ENCODE measurements at regions of chr3 and their contacts with region 1.

Region 1: DNA sequence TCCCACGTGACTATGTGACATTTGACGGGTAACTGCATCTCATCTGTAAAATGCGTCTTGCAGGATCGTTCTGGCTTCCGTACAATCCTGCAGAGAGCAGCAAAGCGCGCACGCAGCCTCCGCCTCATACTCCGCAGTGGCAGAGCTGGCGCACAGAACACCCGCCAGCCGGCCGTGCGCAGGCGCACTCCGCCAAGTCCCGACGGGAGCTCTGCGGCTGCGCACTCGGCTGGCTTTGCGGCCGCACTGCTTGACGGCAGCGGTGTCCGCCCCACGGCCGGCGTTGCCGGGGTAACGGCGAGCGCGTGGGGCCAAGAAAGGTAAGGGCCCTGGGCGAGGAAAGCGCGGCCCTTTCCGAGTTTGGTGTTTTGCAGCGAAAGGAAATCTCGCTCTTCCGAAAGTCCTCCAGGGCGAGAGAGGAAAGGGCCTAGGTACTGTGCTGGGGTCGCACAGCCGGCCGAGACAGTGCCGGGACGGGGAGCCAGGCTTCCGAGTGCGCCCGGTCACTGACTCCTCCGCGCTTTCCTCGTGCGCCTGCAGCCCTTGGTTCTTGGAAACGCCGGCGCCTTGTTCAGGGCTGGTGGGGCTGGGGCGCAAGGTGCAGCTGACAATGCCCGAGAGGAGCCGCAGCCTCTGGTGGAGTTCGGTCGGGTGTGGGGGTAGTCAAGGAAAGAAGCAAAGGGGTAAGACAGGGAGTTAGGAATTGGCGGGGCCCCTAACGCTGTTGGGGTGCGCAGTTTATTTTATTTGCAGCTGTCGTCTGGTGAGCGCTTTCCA is at the start of gene TSEN2:
- DNase-seq: peak; percentile 95
- ATAC-seq: peak; percentile 97
- total RNA-seq, gene TSEN2: 15.3 to 16.8 TPM

Region 2: DNA sequence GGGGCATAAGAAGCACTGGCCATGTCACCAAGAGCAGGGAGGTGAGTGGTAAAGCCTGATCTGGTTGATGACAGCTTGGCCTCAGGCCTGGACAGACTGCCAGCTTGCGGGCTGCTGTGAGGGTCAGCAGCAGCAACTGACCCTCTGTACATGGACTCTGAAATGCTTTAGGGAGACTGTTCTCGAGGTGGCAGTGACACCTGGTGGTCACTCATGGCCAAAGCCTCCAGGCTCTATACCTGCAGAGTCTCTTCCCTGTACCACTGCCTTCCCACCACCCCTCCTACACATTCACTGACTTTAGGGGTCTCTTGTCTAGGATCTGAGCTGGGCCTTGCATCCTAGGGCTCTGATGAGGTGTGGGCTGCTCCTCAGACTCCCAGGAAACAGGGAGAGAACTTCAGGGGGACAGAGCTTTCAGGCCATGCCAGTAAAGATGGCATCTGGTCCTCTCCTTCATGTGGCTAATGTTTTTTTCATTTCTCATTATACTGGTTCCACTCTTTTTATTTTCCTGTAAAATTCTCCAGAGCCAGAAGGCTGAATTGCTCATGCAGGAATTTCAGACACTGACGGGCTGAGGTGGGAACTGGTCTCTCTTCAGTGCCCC is 308.4 kb before region 1 on chr3:
- intact Hi-C with region 1: loop called (anchors 5 kb)
- DNase-seq: peak; percentile 69
- ATAC-seq: peak; percentile 80 to 88

Region 3: GRCh38 chr3:12235691-12236090 is 248.7 kb before region 1 on chr3:
- intact Hi-C with region 1: no loop called
- DNase-seq: no peak
- ATAC-seq: no peak

Region 4: GRCh38 chr3:12287727-12288191 is 196.6 kb before region 1 on chr3:
- intact Hi-C with region 1: loop called (anchors 2 to 10 kb)
- DNase-seq: peak; percentile 62
- ATAC-seq: peak; percentile 88 to 93

Region 5: GRCh38 chr3:12336099-12336498 is 148.3 kb before region 1 on chr3:
- intact Hi-C with region 1: no loop called
- DNase-seq: no peak
- ATAC-seq: no peak